Dorsolateral prefrontal cortex (tissue), 120 donors: ENCODE measurements at regions of chr14 and their contacts with region 1.

Region 1: GRCh38 chr14:50116181-50116956 is at the start of gene VCPKMT:
- DNase-seq: peak; percentile 86 to 94 (median 90)
- H3K4me3 ChIP-seq: peak within 1 kb of the TSS; percentile 61 to 95 (median 80)
- H3K27ac ChIP-seq: peak within 1 kb of the TSS; percentile 76 to 98 (median 93)
- H3K27me3 ChIP-seq: no peaks in the 10 kb centered on the region
- CTCF ChIP-seq: peak in 37 of 56 donors; percentile 6 to 56 (median 37)
- total RNA-seq, gene VCPKMT: 6.6 to 20.4 (median 13.4) TPM

Region 2: DNA sequence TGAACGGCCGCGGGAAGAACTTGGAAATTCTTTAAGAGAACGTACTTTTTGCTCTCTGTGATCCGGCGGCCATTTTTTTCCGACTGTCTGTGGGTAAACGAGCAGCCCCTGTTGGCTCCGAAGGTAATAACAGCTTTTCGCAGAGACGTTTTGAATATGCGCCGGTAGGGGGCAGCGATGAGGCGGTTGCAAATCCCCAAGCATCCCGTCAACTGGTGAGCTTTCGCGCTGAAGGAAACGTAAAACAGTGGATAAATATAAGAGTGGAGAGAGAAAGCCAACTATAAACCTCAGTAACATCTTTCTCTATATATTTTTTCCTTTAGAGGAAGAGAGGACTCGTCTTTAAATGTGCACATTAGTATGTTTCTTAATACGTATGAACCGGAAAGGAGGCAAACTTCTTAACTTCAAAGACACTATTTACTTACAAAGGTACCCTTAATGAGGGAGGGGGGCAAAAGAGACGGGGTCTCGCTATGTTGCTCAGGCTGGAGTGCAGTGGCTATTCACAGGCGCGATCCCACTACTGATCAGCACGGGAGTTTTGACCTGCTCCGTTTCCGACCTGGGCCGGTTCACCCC is 254.2 kb before region 1 on chr14:
- intact Hi-C with region 1: loop called in 1 of 2 experiments (anchors 5 kb)
- DNase-seq: peak; percentile 63 to 86 (median 78)
- H3K4me3 ChIP-seq: peak overlapping the region; percentile 40 to 95 (median 77)
- H3K27ac ChIP-seq: peak overlapping the region; percentile 81 to 100 (median 98)
- H3K27me3 ChIP-seq: no peaks in the 10 kb centered on the region
- CTCF ChIP-seq: peak; percentile 87 to 100 (median 99)

Region 3: DNA sequence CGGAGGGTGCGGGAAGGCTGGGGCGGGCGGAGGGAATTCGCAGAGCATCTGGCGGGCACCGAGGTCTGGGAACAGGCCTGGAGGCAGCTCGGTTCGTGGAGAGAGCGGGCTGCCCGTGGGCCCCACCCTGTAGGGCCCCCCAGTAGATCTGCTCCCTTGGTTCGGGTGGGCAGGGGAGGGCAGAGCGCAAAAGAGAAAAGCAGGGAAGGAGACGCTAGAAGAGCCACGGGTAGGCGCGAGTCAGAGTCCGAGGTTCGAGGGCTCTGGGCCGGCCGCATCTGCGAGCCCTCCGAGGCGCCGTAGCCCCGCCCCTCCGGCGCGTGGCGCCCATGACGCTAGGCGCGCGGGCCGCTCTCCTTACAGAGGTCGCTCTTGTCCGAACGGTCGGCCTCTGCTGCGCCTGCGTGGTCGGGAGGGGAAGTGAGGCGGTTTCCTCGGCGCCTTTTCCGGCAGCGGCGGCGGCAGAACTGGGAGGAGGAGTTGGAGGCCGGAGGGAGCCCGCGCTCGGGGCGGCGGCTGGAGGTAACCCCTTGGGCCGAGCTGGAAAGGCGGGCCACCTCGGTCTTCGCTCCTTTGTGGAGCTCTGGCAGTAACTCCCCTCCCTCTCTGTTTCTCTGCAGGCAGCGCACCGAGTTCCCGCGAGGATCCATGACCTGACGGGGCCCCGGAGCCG is 223.6 kb before region 1 on chr14 and contains the start of gene ARF6:
- intact Hi-C with region 1: loop called in 1 of 2 experiments (anchors 2 kb)
- DNase-seq: peak; percentile 95 to 99 (median 97)
- H3K4me3 ChIP-seq: peak within 1 kb of the TSS; percentile 66 to 100 (median 97)
- H3K27ac ChIP-seq: peak within 1 kb of the TSS; percentile 89 to 100 (median 97)
- H3K27me3 ChIP-seq: no peaks in the 10 kb centered on the region
- CTCF ChIP-seq: peak in 49 of 56 donors; percentile 11 to 72 (median 40)
- total RNA-seq, gene ARF6: 16.6 to 28.7 (median 22.5) TPM

Region 4: DNA sequence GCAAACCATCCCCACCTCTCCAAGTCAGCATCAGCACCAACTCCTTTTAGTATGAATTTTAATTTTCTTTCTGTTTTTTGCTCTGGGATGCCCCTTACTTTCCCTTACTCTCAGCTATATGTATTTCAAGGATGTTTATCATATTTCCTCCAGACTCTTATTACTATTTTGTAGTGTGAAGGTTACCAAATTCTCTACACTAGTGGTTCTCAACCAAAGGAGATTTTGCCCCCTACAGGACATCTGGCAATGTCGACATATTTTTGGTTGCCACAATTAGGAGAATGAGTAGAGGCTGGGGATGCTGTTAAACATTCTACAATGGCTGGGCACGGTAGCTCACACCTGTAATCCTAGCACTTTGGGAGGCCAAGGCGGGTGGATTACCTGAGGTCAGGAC is 144.1 kb after region 1 on chr14:
- intact Hi-C with region 1: no loop called
- DNase-seq: no peak
- H3K4me3 ChIP-seq: no peak overlapping the region
- H3K27ac ChIP-seq: no peak overlapping the region
- H3K27me3 ChIP-seq: no peaks in the 10 kb centered on the region
- CTCF ChIP-seq: peak in 51 of 56 donors; percentile 12 to 62 (median 43)

Region 5: DNA sequence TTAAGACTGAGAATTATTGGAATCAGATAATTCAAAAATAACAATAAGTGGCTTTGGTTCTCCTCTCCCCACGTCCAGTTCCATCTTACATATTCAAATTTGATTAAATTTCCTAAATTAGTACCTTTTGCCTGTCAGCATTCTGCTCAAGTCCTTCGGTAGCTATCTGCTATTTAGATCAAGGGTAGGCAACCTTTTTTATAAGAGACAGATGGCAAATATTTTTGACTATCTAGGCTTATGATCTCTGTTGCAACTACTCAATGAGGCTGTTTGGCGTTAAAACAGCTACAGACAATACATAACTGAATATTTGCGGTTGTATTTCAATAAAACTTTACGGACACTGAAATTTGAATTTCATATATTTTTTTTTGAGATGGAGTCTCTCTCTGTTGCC is 173.9 kb after region 1 on chr14:
- intact Hi-C with region 1: no loop called
- DNase-seq: no peak
- H3K4me3 ChIP-seq: no peak overlapping the region
- H3K27ac ChIP-seq: no peak overlapping the region
- H3K27me3 ChIP-seq: no peaks in the 10 kb centered on the region
- CTCF ChIP-seq: no peak

Region 6: DNA sequence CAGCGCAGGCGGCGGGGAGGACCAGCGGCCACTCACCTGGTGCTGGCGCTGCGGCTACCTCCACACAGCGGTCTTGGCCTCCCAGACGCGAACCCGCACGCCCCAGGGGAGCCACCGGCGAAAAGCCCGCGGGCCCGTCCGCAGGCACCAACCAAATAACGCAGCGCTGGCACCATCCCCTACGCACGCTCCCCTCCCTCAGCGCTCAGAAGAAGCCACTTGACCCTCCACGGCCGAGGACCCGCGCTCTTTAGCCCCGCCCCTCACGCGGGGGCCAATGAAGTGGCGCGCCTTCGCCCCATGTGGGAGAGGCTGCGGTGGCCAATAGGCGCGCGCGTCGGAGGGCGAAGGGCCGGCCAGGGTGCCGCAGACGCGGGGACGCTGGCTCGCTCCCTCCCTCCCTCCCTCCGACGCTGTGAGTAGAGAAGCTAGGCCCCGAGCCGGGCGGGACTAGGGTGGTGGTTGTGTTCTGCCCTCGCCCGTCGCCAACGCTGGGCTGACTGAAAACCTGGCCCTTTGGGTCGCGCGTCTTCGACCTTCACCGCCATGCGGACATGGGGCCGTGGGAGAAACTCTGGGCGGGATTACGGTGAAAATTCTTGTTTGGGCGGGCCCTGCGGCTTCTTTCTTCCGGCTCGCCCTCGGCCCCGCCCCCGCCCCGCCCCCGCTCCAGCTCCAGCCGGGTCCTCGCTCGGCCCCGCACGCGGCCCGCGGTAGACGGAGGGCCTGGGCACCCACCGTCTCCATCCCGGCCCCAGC is 195.8 kb after region 1 on chr14 and contains the starts of genes DMAC2L and L2HGDH:
- intact Hi-C with region 1: loop called in 1 of 2 experiments (anchors 5 kb)
- DNase-seq: peak; percentile 89 to 97 (median 94)
- H3K4me3 ChIP-seq: peak within 1 kb of the TSS; percentile 65 to 100 (median 91)
- H3K27ac ChIP-seq: peak within 1 kb of the TSS; percentile 58 to 96 (median 93)
- H3K27me3 ChIP-seq: no peaks in the 10 kb centered on the region
- CTCF ChIP-seq: peak in 40 of 56 donors; percentile 1 to 55 (median 32)
- total RNA-seq, gene DMAC2L: 12.3 to 38.0 (median 23.5) TPM
- total RNA-seq, gene L2HGDH: 8.9 to 22.1 (median 15.0) TPM